PC-9 (cell line): ENCODE measurements at regions of chr5 and their contacts with region 1.

Region 1: DNA sequence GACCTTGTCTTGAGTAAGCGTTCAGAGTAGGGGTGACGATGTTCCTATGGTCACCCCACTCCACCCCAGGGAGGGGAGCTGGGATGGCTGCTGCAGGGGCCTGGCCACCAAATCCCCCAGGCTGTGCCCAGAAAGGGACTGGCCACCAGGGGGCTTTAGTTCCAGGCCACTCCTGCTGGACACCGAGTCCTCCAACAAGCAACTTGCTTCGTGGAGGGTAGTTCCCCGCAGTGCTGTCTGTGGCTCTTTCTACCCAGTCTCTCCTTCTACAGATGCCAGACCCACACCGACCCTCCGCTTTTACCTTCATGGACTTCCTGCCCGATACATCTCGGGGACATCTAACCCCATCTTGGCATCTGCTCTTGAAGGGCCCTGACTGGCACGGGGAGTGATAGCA is 35.7 kb upstream of the GABRP start:
- DNase-seq: no peak
- H3K4me3 ChIP-seq: no peak overlapping the region
- H3K27ac ChIP-seq: peak overlapping the region; percentile 96
- H3K4me1 ChIP-seq: peaks cover 78% of the 10 kb centered on the region
- H3K27me3 ChIP-seq: no peaks in the 10 kb centered on the region
- CTCF ChIP-seq: peak; percentile 58

Region 2: GRCh38 chr5:170273945-170274710 is 473.7 kb before region 1 on chr5:
- CTCF ChIA-PET with region 1: no interaction called
- POLR2A ChIA-PET with region 1: no interaction called
- intact Hi-C with region 1: no loop called
- DNase-seq: no peak
- H3K4me3 ChIP-seq: no peak overlapping the region
- H3K27ac ChIP-seq: no peak overlapping the region
- H3K4me1 ChIP-seq: no peaks in the 10 kb centered on the region; the same call in 1 of the 2 replicates
- H3K27me3 ChIP-seq: peaks cover 9% of the 10 kb centered on the region; the same call in 1 of the 2 replicates
- CTCF ChIP-seq: peak; percentile 33; the same call in 1 of the 2 replicates

Region 3: DNA sequence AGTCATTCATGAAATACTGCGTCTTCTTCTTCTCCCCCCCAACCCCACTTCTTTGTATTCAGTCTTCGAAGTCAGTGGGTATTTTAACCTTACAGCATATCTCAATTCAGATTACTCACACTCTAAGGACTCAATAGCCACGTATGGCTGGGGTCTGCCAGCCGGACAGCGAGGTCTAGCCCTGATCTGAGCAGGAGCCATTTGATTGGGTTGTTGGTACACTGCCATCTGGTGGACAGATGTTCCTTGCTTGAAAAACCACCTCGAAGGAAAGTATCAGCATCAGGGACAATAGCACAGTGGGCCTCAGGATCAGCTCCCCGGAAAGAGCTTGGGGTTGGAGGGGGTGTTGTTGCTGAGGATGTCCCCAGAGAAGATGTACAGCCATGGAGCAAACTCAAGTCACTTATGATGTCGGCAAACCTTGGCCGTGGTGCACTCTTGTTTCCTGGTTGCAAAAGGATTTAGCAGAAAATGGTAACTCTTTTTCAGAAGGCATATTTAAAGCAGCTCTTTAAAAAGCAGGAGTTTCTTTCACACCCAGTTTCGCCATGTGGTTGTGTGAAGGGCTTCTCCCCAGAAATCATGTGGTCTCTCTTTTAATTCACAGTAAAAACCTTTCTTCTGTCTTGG is 327.0 kb before region 1 on chr5:
- CTCF ChIA-PET with region 1: no interaction called
- POLR2A ChIA-PET with region 1: no interaction called
- intact Hi-C with region 1: no loop called
- DNase-seq: peak; percentile 27 to 46
- H3K4me3 ChIP-seq: no peak overlapping the region
- H3K27ac ChIP-seq: no peak overlapping the region
- H3K4me1 ChIP-seq: no peaks in the 10 kb centered on the region
- H3K27me3 ChIP-seq: peaks cover 4% of the 10 kb centered on the region; the same call in 1 of the 2 replicates
- CTCF ChIP-seq: peak; percentile 85

Region 4: DNA sequence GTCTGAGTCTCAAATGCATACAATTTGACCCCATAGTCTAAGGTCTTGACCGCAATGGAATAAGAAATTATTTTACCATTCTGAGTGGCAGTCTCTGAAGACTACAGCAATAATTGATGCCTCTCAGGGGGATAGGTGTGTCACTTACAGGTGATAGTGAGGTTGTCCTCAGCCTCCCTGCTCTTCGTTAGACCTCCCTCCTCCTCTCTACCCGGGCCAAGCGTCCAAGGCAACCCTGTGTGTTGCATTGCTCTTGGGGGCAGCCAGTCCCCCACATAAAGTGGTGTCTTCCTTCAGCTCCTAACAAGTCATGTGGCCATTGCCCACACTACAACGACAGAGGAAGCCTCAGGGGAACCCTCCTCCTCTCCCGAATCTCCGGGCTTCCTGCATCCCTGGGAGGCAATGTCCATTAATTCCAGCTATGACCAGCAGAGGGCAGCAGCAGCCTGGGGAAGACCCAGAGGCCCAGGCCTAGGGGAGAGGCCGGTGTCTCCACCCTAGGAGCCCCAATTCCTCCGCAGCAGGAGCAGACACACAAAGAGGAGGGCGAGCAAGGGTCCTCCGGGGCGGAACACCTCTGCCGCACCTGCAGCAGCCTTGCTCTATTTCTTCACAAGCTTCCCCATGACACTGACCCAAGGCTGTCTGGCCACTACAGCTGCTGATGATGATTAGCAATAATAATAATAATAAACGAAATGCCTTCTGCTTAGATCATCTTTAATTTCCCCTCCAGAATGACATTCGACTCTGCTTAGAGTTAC is 109.2 kb before region 1 on chr5:
- CTCF ChIA-PET with region 1: no interaction called
- POLR2A ChIA-PET with region 1: no interaction called
- intact Hi-C with region 1: loop called (anchors 2 kb)
- DNase-seq: peak; percentile 43 to 73
- H3K4me3 ChIP-seq: no peak overlapping the region
- H3K27ac ChIP-seq: no peak overlapping the region
- H3K4me1 ChIP-seq: peaks cover 11% of the 10 kb centered on the region
- H3K27me3 ChIP-seq: no peaks in the 10 kb centered on the region; the same call in 1 of the 2 replicates
- CTCF ChIP-seq: peak; percentile 96

Region 5: DNA sequence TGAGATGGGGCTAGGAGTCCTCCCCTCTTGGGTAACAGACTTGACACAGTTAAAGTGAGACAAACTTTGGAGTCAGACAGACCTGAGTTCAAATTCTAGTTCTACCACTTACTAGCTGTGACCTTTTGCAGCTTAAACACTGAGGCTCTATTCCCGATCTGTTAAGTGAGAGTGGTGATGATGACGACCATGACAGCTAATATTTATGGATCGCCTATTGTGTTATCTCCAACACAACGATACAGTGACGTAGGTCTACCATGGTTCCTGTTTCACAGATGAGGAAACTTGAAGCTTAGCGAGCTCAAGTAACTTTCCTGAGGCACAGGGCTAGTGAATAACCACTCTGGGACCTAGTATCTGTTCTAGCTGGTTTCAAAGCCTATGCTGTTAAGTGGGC is 74.7 kb before region 1 on chr5:
- CTCF ChIA-PET with region 1: no interaction called
- POLR2A ChIA-PET with region 1: no interaction called
- intact Hi-C with region 1: no loop called
- DNase-seq: no peak
- H3K4me3 ChIP-seq: no peak overlapping the region
- H3K27ac ChIP-seq: no peak overlapping the region
- H3K4me1 ChIP-seq: no peaks in the 10 kb centered on the region
- H3K27me3 ChIP-seq: peaks cover 65% of the 10 kb centered on the region
- CTCF ChIP-seq: no peak

Region 6: GRCh38 chr5:170773024-170773985 is 25.5 kb after region 1 on chr5:
- CTCF ChIA-PET with region 1: no interaction called
- POLR2A ChIA-PET with region 1: interaction called, 8 read pairs
- intact Hi-C with region 1: loop called (anchors 1 kb)
- DNase-seq: peak; percentile 63 to 75
- H3K4me3 ChIP-seq: no peak overlapping the region
- H3K27ac ChIP-seq: peak overlapping the region; percentile 46
- H3K4me1 ChIP-seq: peaks cover 18% of the 10 kb centered on the region
- H3K27me3 ChIP-seq: no peaks in the 10 kb centered on the region
- CTCF ChIP-seq: no peak

Region 7: DNA sequence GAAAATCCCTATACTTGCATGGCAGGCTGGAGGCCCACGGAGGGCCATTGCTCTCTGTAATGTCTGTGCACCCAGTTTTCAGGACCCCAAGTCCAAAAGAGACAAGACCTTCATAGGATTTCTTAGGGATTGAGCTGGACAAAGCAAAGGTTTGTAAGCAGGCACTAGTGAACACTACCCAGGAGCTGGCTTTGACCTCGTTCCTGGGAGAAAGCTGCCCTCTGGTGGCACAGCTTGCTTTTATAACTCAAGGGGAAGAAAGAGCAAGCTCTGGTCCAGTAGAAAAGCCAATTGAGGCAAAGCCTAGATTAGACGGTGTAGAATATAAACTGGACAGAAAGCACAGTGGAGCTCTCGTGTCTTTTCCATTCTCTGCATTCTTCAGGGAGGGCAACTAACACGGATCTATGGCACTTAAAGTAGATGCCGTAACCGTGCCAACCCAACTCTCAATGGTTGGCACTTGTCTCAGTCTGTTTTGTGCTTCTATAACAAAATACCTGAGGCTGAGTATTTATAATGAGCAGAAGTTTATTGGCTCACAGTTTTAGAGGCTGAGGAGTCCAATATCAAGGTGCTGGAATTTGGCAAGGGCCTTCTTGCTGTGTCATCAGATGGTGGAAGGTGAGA is 43.6 kb after region 1 on chr5:
- CTCF ChIA-PET with region 1: interaction called, 72 read pairs
- POLR2A ChIA-PET with region 1: interaction called, 32 read pairs
- intact Hi-C with region 1: loop called (anchors 1 kb)
- DNase-seq: peak; percentile 56 to 78
- H3K4me3 ChIP-seq: no peak overlapping the region
- H3K27ac ChIP-seq: no peak overlapping the region
- H3K4me1 ChIP-seq: 0 out of 2 replicates have a peak, but pooled peaks cover 3% of the 10 kb centered on the region
- H3K27me3 ChIP-seq: no peaks in the 10 kb centered on the region
- CTCF ChIP-seq: peak; percentile 91

Region 8: DNA sequence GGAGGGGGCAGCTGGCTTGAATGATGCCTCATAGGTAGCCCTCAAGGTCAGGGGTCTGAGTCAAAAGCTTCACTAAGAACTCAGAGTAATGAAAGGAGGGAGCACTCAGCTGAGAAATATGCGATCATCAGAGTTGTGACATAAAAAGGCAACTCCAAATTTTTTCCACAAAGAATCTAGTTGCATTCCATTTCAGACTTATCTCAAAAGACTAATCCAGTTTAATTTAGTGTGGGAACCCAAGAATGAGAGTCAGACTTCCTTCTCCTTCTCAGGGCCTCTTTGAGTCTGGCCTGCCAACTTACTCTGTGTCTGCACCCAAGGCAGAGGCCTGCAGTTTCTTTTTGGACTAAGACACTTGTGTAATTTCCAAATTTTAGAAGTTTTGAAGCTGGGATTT is 70.4 kb after region 1 on chr5:
- CTCF ChIA-PET with region 1: no interaction called
- POLR2A ChIA-PET with region 1: no interaction called
- intact Hi-C with region 1: no loop called
- DNase-seq: peak in 1 of 2 experiments; percentile 46
- H3K4me3 ChIP-seq: no peak overlapping the region
- H3K27ac ChIP-seq: no peak overlapping the region
- H3K4me1 ChIP-seq: 0 out of 2 replicates have a peak, but pooled peaks cover 7% of the 10 kb centered on the region
- H3K27me3 ChIP-seq: no peaks in the 10 kb centered on the region
- CTCF ChIP-seq: no peak

Region 9: DNA sequence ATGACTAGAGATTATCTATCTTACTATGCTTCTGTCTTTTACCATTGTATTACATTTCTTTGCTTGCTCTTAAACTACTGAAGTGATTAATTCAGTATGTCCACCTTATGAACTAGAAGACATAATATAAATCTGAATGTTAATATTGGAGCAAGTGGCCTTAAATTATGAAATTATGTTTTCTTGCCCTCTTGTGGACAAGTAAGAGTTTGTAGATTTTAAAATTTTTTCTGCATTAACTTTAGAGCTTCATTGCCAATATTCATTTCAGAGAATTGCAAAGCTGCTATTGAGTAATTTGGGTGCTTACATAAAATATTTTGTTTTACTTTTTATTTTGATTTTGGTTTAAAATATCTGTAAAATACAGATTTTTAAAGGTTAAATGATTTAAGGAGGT is 169.3 kb after region 1 on chr5:
- CTCF ChIA-PET with region 1: interaction called, 4 read pairs
- POLR2A ChIA-PET with region 1: no interaction called
- intact Hi-C with region 1: loop called (anchors 10 kb)
- DNase-seq: no peak
- H3K4me3 ChIP-seq: no peak overlapping the region
- H3K27ac ChIP-seq: no peak overlapping the region
- H3K4me1 ChIP-seq: no peaks in the 10 kb centered on the region
- H3K27me3 ChIP-seq: no peaks in the 10 kb centered on the region
- CTCF ChIP-seq: peak; percentile 61

Region 10: DNA sequence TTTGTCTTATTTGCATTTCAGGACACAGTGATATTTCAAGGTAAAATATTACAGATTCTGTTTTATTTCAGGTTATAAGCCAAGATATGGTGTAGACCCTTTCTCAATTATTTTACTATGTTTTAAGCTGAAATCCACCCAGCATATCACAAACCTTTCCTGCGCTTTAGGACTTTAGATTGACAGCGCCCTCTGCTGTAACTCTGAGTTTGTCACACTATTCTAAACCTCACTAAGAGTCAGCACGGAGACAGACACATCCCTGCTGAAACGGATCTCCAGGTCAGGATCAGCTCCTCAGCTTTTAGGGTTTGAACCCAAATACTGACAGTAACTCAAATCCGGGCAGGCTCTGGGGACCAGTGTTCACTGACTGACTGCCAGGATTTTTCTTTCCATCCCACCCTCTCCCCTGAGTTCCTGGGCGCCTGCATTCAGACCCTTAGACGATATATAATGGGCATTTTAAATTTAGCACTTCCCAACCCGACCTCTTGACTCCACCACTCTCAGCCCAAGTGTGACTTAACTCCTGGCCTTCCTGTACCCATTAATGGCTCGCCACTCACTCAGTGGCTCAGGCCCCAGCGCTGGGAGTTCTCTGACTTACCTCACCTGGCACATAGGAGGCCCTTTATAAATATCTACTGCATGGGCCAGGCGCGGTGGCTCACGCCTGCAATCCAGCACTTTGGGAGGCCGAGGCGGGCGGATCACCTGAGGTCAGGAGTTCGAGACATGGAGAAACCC is 594.7 kb after region 1 on chr5:
- CTCF ChIA-PET with region 1: interaction called, 3 read pairs
- POLR2A ChIA-PET with region 1: no interaction called
- intact Hi-C with region 1: loop called (anchors 1 kb)
- DNase-seq: peak; percentile 39 to 47
- H3K4me3 ChIP-seq: no peak overlapping the region
- H3K27ac ChIP-seq: no peak overlapping the region
- H3K4me1 ChIP-seq: 0 out of 2 replicates have a peak, but pooled peaks cover 2% of the 10 kb centered on the region
- H3K27me3 ChIP-seq: no peaks in the 10 kb centered on the region
- CTCF ChIP-seq: peak; percentile 84